MCF 10A (cell line): ENCODE measurements at regions of chr4 and their contacts with region 1.

Region 1: DNA sequence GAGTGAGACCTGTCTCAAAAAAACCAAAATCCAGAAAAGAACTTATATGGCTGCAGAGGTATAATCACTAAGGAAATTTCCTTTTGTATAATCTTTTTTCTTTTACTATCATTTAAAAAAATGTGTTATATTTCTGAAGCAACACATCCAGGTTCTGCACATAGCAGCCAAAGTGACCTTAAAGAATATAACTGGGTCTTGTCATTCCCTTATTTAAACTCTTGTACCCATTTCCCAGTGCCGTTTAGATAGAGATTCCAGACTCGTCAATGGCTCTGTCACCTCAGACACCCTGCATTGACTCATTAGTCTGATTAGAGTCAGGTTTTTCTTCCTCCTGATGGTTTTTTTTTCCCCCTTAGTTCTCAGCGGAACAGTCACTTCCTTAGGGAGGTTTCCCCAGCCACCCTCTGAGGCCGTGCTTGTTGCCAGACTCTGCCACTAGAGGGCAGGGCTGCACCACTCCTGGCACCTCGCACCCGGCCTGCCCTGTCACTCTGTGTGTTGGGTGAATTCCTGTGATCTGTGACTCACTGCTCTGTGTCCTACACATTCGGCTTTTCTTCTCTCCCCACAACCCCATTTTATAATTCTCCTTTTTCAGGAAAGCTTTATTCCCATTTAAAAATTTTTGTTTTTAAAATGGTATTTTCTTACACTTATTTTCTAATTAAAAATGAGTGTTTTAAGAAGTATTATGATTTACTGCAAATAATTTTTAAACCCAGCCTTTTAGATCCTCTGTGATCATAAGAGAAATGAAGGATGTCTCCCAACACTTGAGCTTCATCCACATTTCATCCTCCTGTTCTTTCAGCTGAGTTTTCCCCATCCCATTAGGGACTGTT is 32.1 kb downstream of the HTT start:
- DNase-seq: peak; percentile 91
- H3K4me3 Mint-ChIP-seq: no peak overlapping the region
- H3K27ac Mint-ChIP-seq: peak overlapping the region; percentile 57
- H3K4me1 Mint-ChIP-seq: peaks cover 6% of the 10 kb centered on the region
- H3K27me3 Mint-ChIP-seq: no peaks in the 10 kb centered on the region
- CTCF ChIP-seq: peak; percentile 92

Region 2: GRCh38 chr4:2934813-2935761 is 171.5 kb before region 1 on chr4:
- CTCF ChIA-PET with region 1: no interaction called
- POLR2A ChIA-PET with region 1: no interaction called
- intact Hi-C with region 1: no loop called
- DNase-seq: peak; percentile 89
- H3K4me3 Mint-ChIP-seq: peak overlapping the region; percentile 76
- H3K27ac Mint-ChIP-seq: peak overlapping the region; percentile 84
- H3K4me1 Mint-ChIP-seq: peaks cover 33% of the 10 kb centered on the region
- H3K27me3 Mint-ChIP-seq: no peaks in the 10 kb centered on the region
- CTCF ChIP-seq: no peak

Region 3: DNA sequence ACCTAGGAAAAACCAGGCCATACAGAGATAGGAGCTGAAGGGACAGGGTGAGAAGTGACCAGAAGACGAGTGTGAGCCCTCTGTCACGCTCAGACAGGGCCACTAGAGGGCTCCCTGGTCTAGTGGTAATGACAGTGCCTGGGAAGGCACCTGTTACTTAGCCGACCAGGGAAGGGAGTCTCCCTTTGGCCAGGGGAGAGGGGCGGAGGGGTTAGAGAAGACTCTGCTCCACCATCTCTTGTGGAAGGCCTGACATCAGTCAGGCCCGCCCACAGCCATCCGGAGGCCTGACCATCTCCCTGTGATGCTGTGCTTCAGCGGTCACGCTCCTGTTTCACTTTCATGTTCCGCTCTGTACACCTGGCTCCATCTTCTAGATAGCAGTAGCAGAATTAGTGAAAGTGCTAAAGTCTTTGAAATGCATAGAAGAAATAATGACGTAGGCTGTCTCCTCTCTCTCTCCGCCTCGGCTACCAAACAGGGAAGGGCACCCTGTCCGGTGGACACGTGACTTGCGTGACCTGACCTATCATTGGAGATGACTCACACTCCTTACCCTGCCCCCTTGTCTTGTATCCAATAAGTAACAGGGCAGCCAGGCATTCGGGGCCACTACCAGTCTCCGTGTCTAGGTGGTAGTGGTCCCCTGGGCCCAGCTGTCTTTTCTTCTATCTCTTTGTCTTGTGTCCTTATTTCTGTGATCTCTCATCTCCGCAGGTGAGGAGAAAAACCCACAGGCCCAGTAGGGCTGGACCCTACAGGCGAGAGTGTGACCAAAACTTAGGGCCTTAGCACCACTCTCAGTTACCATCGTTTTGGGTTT is 58.9 kb before region 1 on chr4:
- CTCF ChIA-PET with region 1: interaction called, 6 read pairs
- POLR2A ChIA-PET with region 1: no interaction called
- intact Hi-C with region 1: loop called (anchors 5 kb)
- DNase-seq: peak; percentile 73
- H3K4me3 Mint-ChIP-seq: peak overlapping the region; percentile 32
- H3K27ac Mint-ChIP-seq: no peak overlapping the region
- H3K4me1 Mint-ChIP-seq: peaks cover 8% of the 10 kb centered on the region
- H3K27me3 Mint-ChIP-seq: peaks cover 35% of the 10 kb centered on the region
- CTCF ChIP-seq: peak; percentile 80

Region 4: DNA sequence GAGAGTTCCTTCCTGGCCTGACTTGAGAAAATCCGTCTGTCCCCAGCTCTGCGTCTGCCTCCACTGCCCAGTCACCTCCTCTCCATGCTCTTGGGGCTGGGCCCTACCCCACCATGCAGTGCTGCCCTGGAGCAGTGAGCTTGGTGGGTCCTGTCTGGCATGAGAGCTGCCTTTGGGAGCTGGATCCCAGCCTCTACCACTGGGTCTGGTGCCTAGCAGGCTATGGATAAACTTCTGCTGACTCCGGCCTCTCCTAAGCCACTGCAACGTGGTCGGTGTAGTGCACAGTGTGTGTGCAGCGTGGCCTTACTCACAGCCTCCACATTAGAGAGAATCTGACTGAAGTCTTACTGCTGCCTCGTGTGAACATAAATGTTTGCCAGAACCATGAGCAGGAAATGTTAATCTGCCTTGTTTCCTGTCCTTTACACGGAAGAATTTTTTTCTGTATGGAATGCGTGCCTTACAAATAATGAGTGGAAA is 15.6 kb after region 1 on chr4:
- CTCF ChIA-PET with region 1: interaction called, 33 read pairs
- POLR2A ChIA-PET with region 1: interaction called, 13 read pairs
- intact Hi-C with region 1: no loop called
- DNase-seq: no peak
- H3K4me3 Mint-ChIP-seq: no peak overlapping the region
- H3K27ac Mint-ChIP-seq: no peak overlapping the region
- H3K4me1 Mint-ChIP-seq: no peaks in the 10 kb centered on the region
- H3K27me3 Mint-ChIP-seq: no peaks in the 10 kb centered on the region
- CTCF ChIP-seq: no peak

Region 5: DNA sequence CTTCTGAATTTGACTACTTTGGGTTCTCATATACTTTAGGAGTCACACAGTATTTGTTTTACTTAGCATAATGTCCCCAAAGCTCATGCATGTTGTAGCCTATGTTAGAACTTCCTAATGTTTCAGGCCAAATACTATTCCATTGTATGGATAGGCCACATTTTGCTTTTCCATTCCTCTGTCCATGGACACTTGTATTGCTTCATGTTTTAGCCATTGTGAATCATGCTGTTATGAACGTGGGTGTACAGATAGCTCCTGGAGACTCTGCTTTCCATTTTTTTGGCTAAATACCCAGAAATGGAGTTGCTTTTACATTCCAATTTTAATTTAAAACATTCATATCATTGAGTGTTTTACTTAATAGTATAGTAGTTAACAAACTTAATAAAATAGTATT is 22.4 kb after region 1 on chr4:
- CTCF ChIA-PET with region 1: interaction called, 33 read pairs
- POLR2A ChIA-PET with region 1: interaction called, 13 read pairs
- intact Hi-C with region 1: no loop called
- DNase-seq: peak; percentile 33
- H3K4me3 Mint-ChIP-seq: no peak overlapping the region
- H3K27ac Mint-ChIP-seq: no peak overlapping the region
- H3K4me1 Mint-ChIP-seq: no peaks in the 10 kb centered on the region
- H3K27me3 Mint-ChIP-seq: no peaks in the 10 kb centered on the region
- CTCF ChIP-seq: no peak